Sciatic nerve (tissue), 2 donors: ENCODE measurements at regions of chr18 and their contacts with region 1.

Region 1: GRCh38 chr18:49517483-49517882 is 30.4 kb upstream of the C18orf32 start:
- DNase-seq: no peak
- ATAC-seq: no peak

Region 2: GRCh38 chr18:49227441-49228165 is 289.9 kb before region 1 on chr18:
- intact Hi-C with region 1: no loop called
- DNase-seq: no peak
- ATAC-seq: no peak

Region 3: DNA sequence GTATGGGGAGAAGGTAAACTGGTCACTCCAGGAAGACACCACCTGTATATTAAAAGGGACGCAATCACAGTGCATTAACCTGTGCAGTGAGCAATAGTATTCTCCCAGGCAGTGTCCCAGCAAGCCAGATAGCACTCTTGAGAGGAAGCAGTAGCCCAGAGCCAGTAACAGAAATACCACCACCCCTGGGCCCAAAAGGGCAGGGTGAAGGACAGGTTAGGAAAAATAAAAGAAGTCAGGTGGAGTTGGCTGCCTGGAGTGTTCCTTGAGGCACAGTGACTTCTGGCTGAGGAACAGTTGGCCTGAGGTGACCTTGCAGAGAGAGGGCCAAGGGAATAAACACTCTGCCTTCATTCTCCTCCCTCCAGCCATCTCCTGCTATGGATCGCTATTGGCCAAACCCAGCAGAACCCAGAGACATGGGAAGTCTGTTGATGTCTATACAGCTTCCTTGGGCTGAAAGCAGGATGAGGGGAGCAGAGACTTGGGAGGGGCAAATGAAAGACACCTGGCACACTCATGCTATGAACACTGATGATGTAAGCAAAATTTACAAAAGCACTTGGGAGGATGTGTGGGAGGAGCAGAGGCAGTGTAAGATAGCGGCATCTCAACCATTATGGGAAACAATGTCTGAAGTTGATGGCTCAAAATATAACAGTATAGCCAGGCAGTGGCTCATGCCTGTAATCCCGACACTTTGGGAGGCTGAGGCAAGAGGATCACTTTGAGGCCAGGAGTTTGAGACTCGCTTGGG is 37.9 kb before region 1 on chr18:
- intact Hi-C with region 1: loop called (anchors 2 kb)
- DNase-seq: no peak
- ATAC-seq: no peak

Region 4: DNA sequence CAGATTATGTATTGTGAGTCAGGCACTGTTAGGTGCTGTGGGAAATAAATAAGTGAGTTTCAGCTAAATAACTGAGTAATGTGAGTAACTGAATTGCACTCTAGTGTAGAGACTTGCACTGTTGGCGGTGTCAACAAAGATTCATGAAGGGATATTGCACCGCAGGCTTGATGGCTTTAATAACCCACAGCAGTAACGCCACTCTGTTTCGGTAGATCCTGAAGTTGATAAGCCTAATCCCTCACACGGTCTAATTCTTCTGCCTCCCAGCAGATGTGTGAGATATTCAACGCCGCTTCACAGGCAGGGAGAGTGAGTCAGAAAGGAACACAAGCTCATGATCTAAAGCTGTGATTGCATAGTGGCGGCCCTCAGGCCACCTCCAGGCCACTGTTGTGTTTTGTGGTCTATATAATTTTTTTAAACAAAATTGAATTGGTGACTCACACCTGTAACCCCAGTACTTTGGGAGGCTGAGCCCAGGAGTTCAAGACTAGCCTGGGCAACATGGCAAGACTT is 138.6 kb after region 1 on chr18:
- intact Hi-C with region 1: no loop called
- DNase-seq: no peak
- ATAC-seq: no peak